Activated CD4-positive, alpha-beta memory T cell treated with anti-CD3 and anti-CD28 coated beads for 36 hours (primary cell): ENCODE measurements at regions of chr1 and their contacts with region 1.

Region 1: GRCh38 chr1:36088575-36089443 is at the start of gene ADPRS:
- DNase-seq: peak; percentile 94
- H3K4me3 Mint-ChIP-seq: peak within 1 kb of the TSS; percentile 89
- H3K27ac Mint-ChIP-seq: peak within 1 kb of the TSS; percentile 82
- H3K4me1 Mint-ChIP-seq: peaks cover 15% of the 10 kb centered on the region
- H3K27me3 Mint-ChIP-seq: peaks cover 13% of the 10 kb centered on the region
- total RNA-seq, gene ADPRS: 33.3 TPM

Region 2: GRCh38 chr1:35807614-35808449 is 281.0 kb before region 1 on chr1 and contains the start of gene AGO4:
- CTCF ChIA-PET with region 1: interaction called, 6 read pairs
- POLR2A ChIA-PET with region 1: no interaction called
- intact Hi-C with region 1: loop called (anchors 2 kb)
- DNase-seq: peak; percentile 41
- H3K4me3 Mint-ChIP-seq: peak within 1 kb of the TSS; percentile 86
- H3K27ac Mint-ChIP-seq: peak within 1 kb of the TSS; percentile 81
- H3K4me1 Mint-ChIP-seq: peaks cover 36% of the 10 kb centered on the region
- H3K27me3 Mint-ChIP-seq: no peaks in the 10 kb centered on the region
- total RNA-seq, gene AGO4: 5.1 to 6.0 TPM

Region 3: GRCh38 chr1:35882945-35883634 is 205.7 kb before region 1 on chr1 and contains the start of gene AGO1:
- CTCF ChIA-PET with region 1: interaction called, 6 read pairs
- POLR2A ChIA-PET with region 1: no interaction called
- intact Hi-C with region 1: loop called (anchors 2 kb)
- DNase-seq: peak; percentile 98
- H3K4me3 Mint-ChIP-seq: peak within 1 kb of the TSS; percentile 92
- H3K27ac Mint-ChIP-seq: peak within 1 kb of the TSS; percentile 61
- H3K4me1 Mint-ChIP-seq: peaks cover 46% of the 10 kb centered on the region
- H3K27me3 Mint-ChIP-seq: no peaks in the 10 kb centered on the region
- total RNA-seq, gene AGO1: 28.8 TPM

Region 4: DNA sequence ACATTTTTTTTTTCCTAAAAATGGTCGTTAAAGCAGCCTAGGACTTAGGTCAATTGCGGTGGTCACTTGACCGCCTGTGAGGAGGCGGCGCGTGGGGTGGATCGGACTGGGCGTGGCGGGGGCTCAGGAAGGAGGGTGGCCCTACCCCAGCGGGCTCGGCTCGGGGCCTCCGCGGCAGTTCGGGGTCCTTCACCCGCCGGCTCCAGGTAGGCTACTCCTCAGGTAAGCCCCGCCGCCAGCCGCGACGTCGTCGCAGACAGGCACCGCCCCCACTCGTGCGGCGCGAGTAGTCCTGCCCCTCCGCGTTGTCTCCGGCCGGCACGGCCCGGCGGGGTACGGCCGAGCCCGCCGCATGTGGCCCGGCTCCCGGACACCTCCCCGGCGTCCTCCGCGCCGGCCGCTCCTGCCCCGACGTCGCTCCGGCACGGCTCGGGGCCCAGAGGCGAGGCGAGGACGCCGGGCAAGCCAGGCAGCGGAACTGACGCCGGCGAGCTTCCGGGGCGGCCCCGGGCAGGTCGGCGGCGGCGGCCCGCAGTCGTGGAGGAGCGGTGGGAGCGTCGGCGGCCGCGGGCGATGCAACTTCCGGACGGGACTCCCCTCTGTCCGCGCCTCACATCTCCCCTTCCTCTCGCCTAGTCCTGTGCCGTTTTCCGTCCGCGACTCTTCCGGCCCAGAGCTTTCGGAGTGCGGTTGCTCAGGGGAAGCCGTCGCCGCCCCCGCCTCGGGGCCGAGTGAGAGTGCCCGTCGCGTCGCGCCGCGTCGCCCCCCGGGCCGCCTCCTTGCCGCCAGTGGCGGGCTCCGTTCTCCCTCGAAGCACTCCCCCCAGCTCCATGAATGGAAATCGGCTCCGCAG is 158.0 kb before region 1 on chr1 and contains the start of gene AGO3:
- CTCF ChIA-PET with region 1: no interaction called
- POLR2A ChIA-PET with region 1: interaction called, 3 read pairs
- intact Hi-C with region 1: loop called (anchors 1 kb)
- DNase-seq: peak; percentile 94
- H3K4me3 Mint-ChIP-seq: peak within 1 kb of the TSS; percentile 94
- H3K27ac Mint-ChIP-seq: peak within 1 kb of the TSS; percentile 93
- H3K4me1 Mint-ChIP-seq: peaks cover 33% of the 10 kb centered on the region
- H3K27me3 Mint-ChIP-seq: no peaks in the 10 kb centered on the region
- total RNA-seq, gene AGO3: 23.1 to 25.3 TPM

Region 5: DNA sequence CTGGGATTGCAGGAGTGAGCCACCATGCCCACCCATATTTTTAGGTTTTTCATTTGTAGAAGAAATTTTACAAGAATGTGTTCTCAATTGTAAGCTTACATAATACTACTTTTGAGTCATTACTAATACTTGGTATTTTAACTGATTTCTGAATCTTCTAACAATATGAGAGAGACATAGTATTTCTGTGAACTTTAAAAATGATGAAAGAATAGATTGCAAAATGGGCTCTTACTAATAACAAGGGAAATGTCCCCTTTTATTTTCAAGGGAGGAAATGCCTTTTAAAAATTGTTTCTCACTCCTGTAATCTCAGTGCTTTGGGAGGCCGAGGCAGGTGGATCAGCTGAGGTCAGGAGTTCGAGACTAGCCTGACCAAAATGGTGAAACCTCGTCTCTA is 152.0 kb before region 1 on chr1:
- CTCF ChIA-PET with region 1: no interaction called
- POLR2A ChIA-PET with region 1: no interaction called
- intact Hi-C with region 1: loop called (anchors 1 kb)
- DNase-seq: no peak
- H3K4me3 Mint-ChIP-seq: no peak overlapping the region
- H3K27ac Mint-ChIP-seq: no peak overlapping the region
- H3K4me1 Mint-ChIP-seq: peaks cover 46% of the 10 kb centered on the region
- H3K27me3 Mint-ChIP-seq: no peaks in the 10 kb centered on the region